HCT116 (cell line): ENCODE measurements at regions of chr3 and their contacts with region 1.

Region 1: DNA sequence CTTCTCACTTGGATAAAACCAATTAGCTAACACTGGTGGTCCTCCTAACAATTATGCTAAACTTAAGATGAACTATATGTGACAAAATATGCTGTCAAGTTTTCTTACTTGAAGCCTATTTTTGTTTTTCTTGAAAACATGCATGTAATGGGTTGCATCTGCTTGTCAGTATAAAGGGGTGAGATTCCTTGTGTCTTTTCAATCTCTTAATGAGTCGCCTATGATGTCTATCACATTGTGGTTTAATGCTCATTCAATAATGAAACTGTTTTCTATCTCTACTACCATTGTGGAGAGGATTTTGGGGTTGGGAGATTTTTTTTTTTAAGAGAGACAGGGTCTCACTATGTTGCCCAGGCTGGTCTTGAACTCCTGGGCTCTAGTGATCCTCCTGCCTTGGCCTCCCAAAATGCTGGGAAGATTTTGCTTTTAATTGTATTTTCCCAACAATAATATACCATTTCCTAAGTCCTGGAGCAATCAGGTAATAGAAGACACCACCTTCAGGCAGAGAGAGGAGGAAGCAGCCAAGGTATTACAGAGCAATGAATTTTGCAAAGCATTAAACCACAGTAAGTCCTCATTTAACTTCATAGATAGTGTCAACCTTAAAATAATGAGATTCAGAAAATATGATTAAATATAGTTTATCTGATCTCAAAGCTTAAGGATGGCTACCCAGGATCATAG is 17.4 kb upstream of the TRMT10C start:
- DNase-seq: no peak
- ATAC-seq: peak; percentile 66
- H3K4me3 ChIP-seq: no peak overlapping the region
- H3K27ac ChIP-seq: no peak overlapping the region
- H3K4me1 ChIP-seq: no peaks in the 10 kb centered on the region
- H3K27me3 ChIP-seq: no peaks in the 10 kb centered on the region
- CTCF ChIP-seq: peak in 2 of 3 experiments; percentile 30 to 48; a peak in 2 of 6 replicates
- POLR2A ChIP-seq: no peak
- RAD21 ChIP-seq: peak; percentile 54

Region 2: GRCh38 chr3:101212730-101213129 is 331.6 kb before region 1 on chr3:
- CTCF ChIA-PET with region 1: no interaction called
- POLR2A ChIA-PET with region 1: no interaction called
- RAD21 ChIA-PET with region 1: no interaction called
- intact Hi-C with region 1: loop called (anchors 5 kb)
- DNase-seq: no peak
- ATAC-seq: no peak
- H3K4me3 ChIP-seq: no peak overlapping the region
- H3K27ac ChIP-seq: no peak overlapping the region
- H3K4me1 ChIP-seq: no peaks in the 10 kb centered on the region
- H3K27me3 ChIP-seq: no peaks in the 10 kb centered on the region
- CTCF ChIP-seq: no peak
- POLR2A ChIP-seq: no peak
- RAD21 ChIP-seq: no peak